ENCODE measurements at regions of chr17 and their contacts with region 1.

Region 1: DNA sequence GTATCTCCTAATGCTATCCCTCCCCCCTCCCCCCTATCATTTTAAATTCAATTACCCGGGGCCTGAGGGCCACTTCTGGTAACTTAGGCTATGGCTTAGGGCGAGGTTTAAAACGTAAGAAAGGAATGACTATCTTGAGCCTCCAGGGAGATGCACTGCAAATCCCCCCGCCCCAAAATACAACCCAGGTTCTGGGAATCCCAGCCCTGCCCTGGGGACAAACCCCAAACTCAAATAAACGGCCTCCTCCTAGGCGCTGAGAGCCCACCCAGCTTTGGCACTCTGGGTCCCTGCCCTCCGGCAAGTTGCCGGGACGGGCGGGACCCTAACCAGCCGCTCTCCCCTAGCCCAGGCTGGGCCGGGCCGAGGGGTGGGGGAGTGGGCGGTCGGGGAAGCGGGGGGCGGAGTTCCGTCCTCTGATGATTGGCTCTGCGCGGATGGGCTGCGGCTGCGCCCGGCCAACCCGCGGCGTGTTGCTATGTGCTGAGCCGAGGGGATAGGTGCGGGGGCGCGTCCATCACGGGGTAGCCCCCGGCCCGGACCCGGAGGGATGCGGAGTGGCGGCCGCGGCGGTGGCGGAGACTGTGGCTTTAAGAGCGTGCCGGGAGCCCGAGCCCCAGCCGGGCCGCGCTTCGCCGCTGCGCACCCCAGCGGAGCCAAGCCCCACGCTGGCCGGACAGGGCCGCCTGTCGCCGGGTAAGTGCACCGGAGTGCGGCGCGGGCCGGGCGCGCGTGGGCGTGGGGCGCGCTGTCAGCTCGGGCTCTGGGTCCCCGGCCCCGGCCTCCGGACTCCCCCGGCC is at the start of gene YPEL2:
- DNase-seq: peak; percentile 98
- ATAC-seq: peak; percentile 88 to 95 (median 91)
- H3K4me3 ChIP-seq: peak within 1 kb of the TSS; percentile 89
- H3K27ac ChIP-seq: peak within 1 kb of the TSS; percentile 98
- H3K4me1 ChIP-seq: peaks cover 53% of the 10 kb centered on the region
- H3K27me3 ChIP-seq: no peaks in the 10 kb centered on the region
- CTCF ChIP-seq: no peak
- total RNA-seq, gene YPEL2: 19.9 to 47.8 (median 22.3) TPM

Region 2: GRCh38 chr17:59366773-59367657 is 35.7 kb after region 1 on chr17:
- intact Hi-C with region 1: loop called (anchors 2 to 5 kb)
- DNase-seq: no peak
- ATAC-seq: peak; percentile 70 to 77 (median 74)
- H3K4me3 ChIP-seq: peak overlapping the region; percentile 28
- H3K27ac ChIP-seq: peak overlapping the region; percentile 92
- H3K4me1 ChIP-seq: peaks cover 99% of the 10 kb centered on the region
- H3K27me3 ChIP-seq: no peaks in the 10 kb centered on the region
- CTCF ChIP-seq: no peak

Region 3: DNA sequence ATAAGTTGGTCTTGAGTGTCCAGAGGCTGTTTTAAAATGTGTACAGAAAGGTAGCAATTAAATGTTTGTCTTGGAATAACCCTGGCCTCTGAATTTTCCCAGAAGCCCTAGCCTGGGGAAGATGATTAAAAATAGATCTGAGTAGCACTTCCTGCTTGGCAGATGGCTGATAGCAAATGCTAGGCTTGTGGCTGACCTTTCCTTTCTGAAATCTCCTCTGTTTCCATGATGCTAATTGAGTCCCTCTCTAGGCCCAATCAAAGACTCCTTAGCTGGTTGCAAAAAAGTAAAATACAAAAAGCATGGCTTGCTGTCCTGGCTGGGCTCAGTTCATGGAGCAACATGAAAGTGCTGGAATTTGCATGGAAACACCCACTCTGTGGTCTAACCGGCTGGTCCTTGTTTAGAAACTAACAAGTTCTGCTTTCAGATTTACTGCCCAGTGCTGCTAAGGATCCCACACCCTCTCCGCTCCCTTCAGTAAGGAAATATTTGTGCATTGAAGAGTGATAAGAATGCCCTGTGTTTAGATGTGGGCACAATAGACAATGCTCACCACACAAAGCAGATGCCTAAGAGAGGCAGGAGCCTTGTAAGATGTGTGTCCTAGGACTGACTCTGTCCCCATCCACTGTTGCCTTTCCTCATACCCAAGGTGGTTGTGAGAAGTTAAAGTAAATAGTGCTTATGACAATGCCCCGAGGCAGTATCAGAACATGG is 41.0 kb after region 1 on chr17:
- intact Hi-C with region 1: loop called (anchors 2 to 5 kb)
- DNase-seq: peak in 1 of 2 donors; percentile 41
- ATAC-seq: peak; percentile 71 to 76 (median 74)
- H3K4me3 ChIP-seq: peak overlapping the region; percentile 50
- H3K27ac ChIP-seq: peak overlapping the region; percentile 92
- H3K4me1 ChIP-seq: peaks cover 97% of the 10 kb centered on the region
- H3K27me3 ChIP-seq: no peaks in the 10 kb centered on the region
- CTCF ChIP-seq: no peak

Region 4: GRCh38 chr17:59440784-59441441 is 109.6 kb after region 1 on chr17:
- intact Hi-C with region 1: loop called (anchors 1 to 2 kb)
- DNase-seq: peak; percentile 84 to 90
- ATAC-seq: peak; percentile 93 to 95 (median 94)
- H3K4me3 ChIP-seq: no peak overlapping the region
- H3K27ac ChIP-seq: peak overlapping the region; percentile 76
- H3K4me1 ChIP-seq: peaks cover 38% of the 10 kb centered on the region
- H3K27me3 ChIP-seq: no peaks in the 10 kb centered on the region
- CTCF ChIP-seq: peak; percentile 90